Gastrocnemius medialis (tissue), 4 donors: ENCODE measurements at regions of chr10 and their contacts with region 1.

Region 1: GRCh38 chr10:3068201-3068967 is 1.0 kb downstream of the PFKP start:
- DNase-seq: peak in 1 of 2 donors; percentile 40
- ATAC-seq: peak; percentile 50 to 61
- H3K4me3 ChIP-seq: peak overlapping the region; percentile 66 to 84 (median 74)
- H3K27ac ChIP-seq: peak overlapping the region; percentile 28 to 55 (median 50)
- H3K4me1 ChIP-seq: peaks cover 0 to 23% of the 10 kb centered on the region in 2 donors
- H3K27me3 ChIP-seq: peaks cover 17 to 33% (median 21%) of the 10 kb centered on the region in 3 donors
- CTCF ChIP-seq: peak in 4 of 5 experiments; percentile 22 to 58 (median 34)
- POLR2A ChIP-seq: no peak

Region 2: DNA sequence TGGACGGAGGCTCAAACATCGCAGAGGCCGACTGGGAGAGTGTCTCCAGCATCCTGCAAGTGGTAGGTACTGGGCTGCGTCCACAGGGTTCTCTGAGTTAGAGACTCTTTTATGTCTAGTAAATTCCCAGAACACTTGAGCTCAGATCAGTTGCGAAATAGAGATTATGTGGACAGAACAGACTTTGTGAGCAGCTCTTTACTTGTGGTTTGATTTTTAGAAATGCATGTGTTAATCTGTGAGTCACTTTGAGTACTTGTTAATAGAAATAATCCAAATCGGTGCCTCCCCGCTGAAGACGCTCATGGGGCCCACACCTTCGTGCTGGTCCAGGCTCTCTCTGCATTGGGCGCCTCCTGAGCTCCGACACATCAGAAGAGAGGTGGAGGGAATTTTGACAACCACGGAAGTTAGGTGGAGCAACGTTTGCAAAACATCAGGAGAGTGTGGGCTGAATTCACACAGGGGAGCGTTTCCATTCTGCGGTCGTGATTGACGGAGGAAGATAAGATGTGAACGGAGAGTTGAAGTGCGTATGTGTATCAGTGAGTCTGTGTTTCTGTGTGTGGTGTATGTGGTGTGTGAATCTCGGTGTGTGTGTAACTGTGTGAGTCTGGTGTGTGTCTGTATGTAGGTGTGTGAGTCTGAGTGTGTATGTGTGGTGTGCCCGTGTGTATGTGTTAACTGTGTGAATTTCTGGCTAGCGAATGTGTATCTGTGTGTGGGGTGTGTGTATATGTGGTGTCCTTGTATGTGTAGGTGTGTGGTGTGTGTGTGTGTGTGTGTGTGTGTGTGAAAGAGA is 31.1 kb after region 1 on chr10:
- in situ Hi-C with region 1: no loop called
- intact Hi-C with region 1: loop called (anchors 5 kb)
- DNase-seq: no peak
- ATAC-seq: no peak
- H3K4me3 ChIP-seq: no peak overlapping the region
- H3K27ac ChIP-seq: no peak overlapping the region
- H3K4me1 ChIP-seq: peaks cover 18 to 35% of the 10 kb centered on the region in 2 donors
- H3K27me3 ChIP-seq: no peaks in the 10 kb centered on the region
- CTCF ChIP-seq: no peak
- POLR2A ChIP-seq: no peak

Region 3: DNA sequence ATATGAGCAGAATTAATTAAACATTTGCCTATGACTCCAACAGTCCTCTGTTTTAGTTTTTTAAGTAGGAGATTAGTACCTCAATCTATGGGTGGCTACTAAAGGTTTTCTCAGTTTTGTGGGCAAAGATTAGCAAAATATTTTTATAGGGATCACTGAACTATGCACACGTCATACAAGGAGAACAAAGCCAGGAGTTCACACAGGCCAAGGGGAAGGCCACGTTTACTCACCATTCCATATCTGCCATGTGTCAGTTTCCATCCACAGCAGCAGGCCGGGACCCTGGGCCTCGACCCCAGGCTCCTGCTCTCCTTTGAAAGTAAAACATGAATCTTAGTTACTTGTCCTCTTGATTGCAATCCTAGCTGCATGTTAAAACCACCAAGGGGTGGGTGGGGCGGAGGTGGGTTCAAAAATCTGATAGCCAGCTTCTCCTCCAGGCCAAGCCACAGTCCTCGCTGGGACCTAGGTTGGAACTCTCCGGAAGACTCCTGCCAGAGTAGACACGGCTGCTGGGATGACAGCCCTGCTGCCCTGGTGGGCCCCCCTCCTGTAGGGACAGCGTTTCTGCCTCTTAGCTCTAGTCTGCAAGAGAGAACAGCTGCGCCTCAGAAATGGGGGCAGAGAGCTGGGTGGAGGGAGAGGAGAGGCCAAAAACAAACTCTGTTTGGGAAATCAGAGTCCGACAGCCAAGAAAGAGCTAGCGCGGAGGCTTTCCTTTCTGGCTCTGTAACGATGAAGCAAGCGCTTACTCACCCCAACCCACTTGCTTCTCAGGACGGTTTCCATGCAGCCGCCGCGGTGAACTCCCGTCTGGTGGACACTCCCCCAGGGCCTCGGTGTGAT is 68.6 kb after region 1 on chr10:
- in situ Hi-C with region 1: no loop called
- intact Hi-C with region 1: loop called (anchors 5 kb)
- DNase-seq: peak; percentile 68 to 94
- ATAC-seq: peak; percentile 90 to 95
- H3K4me3 ChIP-seq: peak overlapping the region; percentile 5 to 26 (median 15)
- H3K27ac ChIP-seq: peak overlapping the region; percentile 81 to 94 (median 87)
- H3K4me1 ChIP-seq: peaks cover 21 to 22% of the 10 kb centered on the region in 2 donors
- H3K27me3 ChIP-seq: no peaks in the 10 kb centered on the region
- CTCF ChIP-seq: no peak
- POLR2A ChIP-seq: peak in 1 of 2 donors; percentile 36

Region 4: DNA sequence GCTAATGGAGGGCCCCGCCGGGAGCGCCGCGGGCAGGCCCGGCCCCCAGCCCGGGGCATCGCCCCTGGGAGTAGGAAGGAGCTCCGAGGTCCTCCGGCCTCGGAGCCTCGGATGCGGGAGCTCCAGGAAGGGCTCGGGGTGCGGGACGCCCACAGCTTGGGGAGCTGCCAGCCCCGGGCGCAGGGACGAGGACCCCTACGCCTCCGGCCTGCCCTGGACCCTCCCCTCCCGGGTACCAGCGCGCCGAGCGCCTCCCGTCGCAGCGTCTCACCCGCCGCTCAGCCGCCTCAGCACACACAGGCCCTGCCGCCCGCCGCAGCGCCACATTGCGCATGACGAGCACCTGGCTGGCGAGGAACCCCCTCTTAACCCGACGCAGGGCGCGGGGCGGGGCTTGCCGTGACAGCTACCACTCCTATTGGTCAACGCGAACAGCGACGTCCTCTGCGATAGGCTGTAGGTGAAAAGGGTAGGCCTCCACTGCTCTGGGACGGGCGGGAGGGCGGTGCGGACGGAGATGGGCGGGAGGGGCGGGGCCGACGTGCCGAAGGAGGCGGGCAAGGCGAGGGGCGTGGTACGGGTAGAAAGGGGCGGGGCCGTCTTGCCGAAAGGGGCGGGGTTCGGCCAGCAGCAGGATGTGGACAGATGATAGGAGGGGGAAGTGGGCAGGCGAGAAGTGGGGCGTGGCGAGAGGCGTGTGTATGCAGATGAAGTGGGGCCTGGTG is 104.2 kb after region 1 on chr10 and contains the start of gene PITRM1:
- in situ Hi-C with region 1: no loop called
- intact Hi-C with region 1: loop called (anchors 1 kb)
- DNase-seq: peak; percentile 99
- ATAC-seq: peak; percentile 97 to 99
- H3K4me3 ChIP-seq: peak within 1 kb of the TSS; percentile 68 to 90 (median 80)
- H3K27ac ChIP-seq: peak within 1 kb of the TSS; percentile 85 to 95 (median 90)
- H3K4me1 ChIP-seq: peaks cover 6 to 8% of the 10 kb centered on the region in 2 donors
- H3K27me3 ChIP-seq: no peaks in the 10 kb centered on the region
- CTCF ChIP-seq: no peak
- POLR2A ChIP-seq: peak; percentile 99
- total RNA-seq, gene PITRM1: 81.9 to 123 (median 90.2) TPM